H1 (cell line): ENCODE measurements at regions of chr5 and their contacts with region 1.

Region 1: GRCh38 chr5:53035868-53036381 is 46.8 kb downstream of the ITGA2 start:
- DNase-seq: no peak
- H3K4me3 ChIP-seq: no peak overlapping the region
- H3K27ac ChIP-seq: no peak overlapping the region
- H3K4me1 ChIP-seq: no peaks in the 10 kb centered on the region
- H3K27me3 ChIP-seq: no peaks in the 10 kb centered on the region
- CTCF ChIP-seq: peak in 2 of 3 experiments; percentile 35 to 57; a peak in 2 of 4 replicates
- EP300 ChIP-seq: no peak
- POLR2A ChIP-seq: no peak
- RAD21 ChIP-seq: peak; percentile 18 to 32; a peak in 3 of 4 replicates

Region 2: GRCh38 chr5:52915176-52915875 is 120.6 kb before region 1 on chr5:
- CTCF ChIA-PET with region 1: no interaction called
- POLR2A ChIA-PET with region 1: no interaction called
- DNase-seq: peak; percentile 27 to 59
- H3K4me3 ChIP-seq: peak overlapping the region; percentile 13 to 59 (median 32); a peak in 7 of 8 replicates
- H3K27ac ChIP-seq: no peak overlapping the region
- H3K4me1 ChIP-seq: no peaks in the 10 kb centered on the region
- H3K27me3 ChIP-seq: no peaks in the 10 kb centered on the region
- CTCF ChIP-seq: peak; percentile 13 to 76 (median 54)
- EP300 ChIP-seq: no peak
- POLR2A ChIP-seq: no peak
- RAD21 ChIP-seq: peak; percentile 62 to 63

Region 3: GRCh38 chr5:52989781-52990527 is 46.0 kb before region 1 on chr5:
- CTCF ChIA-PET with region 1: interaction called, 11 read pairs
- POLR2A ChIA-PET with region 1: no interaction called
- DNase-seq: peak in 1 of 2 experiments; percentile 57
- H3K4me3 ChIP-seq: peak overlapping the region; percentile 77 to 92 (median 88)
- H3K27ac ChIP-seq: no peak overlapping the region
- H3K4me1 ChIP-seq: no peaks in the 10 kb centered on the region; a peak in 1 of 7 replicates
- H3K27me3 ChIP-seq: peaks cover 0 to 13% (median 10%) of the 10 kb centered on the region in 4 experiments; a peak in 4 of 7 replicates
- CTCF ChIP-seq: peak; percentile 45 to 52 (median 45)
- EP300 ChIP-seq: no peak
- POLR2A ChIP-seq: no peak
- RAD21 ChIP-seq: peak; percentile 62 to 72

Region 4: GRCh38 chr5:53008751-53009150 is 27.2 kb before region 1 on chr5:
- CTCF ChIA-PET with region 1: interaction called, 17 read pairs
- POLR2A ChIA-PET with region 1: no interaction called
- DNase-seq: no peak
- H3K4me3 ChIP-seq: no peak overlapping the region
- H3K27ac ChIP-seq: no peak overlapping the region
- H3K4me1 ChIP-seq: no peaks in the 10 kb centered on the region
- H3K27me3 ChIP-seq: no peaks in the 10 kb centered on the region
- CTCF ChIP-seq: no peak
- EP300 ChIP-seq: no peak
- POLR2A ChIP-seq: no peak
- RAD21 ChIP-seq: no peak

Region 5: DNA sequence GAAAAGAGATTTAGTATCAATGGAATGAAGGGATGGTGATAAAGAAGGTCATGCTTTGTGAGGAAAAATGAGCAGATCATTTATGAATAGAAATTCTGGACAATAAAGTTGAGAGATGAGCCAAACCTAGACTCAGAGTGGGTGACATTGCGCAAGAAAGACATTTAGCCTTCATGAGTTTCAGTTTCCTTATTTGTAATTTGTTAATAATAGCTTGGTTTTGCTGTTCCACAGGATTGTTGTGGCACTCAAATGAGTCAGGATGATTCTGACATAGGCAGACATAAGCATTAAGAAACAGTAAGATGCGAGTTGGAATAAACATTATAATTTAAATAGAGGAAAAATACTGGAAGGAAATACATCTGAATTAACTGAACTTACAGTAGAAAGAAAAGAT is 12.0 kb before region 1 on chr5:
- CTCF ChIA-PET with region 1: interaction called, 24 read pairs
- POLR2A ChIA-PET with region 1: no interaction called
- DNase-seq: no peak
- H3K4me3 ChIP-seq: no peak overlapping the region
- H3K27ac ChIP-seq: no peak overlapping the region
- H3K4me1 ChIP-seq: no peaks in the 10 kb centered on the region
- H3K27me3 ChIP-seq: no peaks in the 10 kb centered on the region
- CTCF ChIP-seq: no peak
- EP300 ChIP-seq: no peak
- POLR2A ChIP-seq: no peak
- RAD21 ChIP-seq: no peak

Region 6: GRCh38 chr5:53052499-53052898 is 16.6 kb after region 1 on chr5:
- CTCF ChIA-PET with region 1: interaction called, 32 read pairs
- POLR2A ChIA-PET with region 1: no interaction called
- DNase-seq: no peak
- H3K4me3 ChIP-seq: no peak overlapping the region
- H3K27ac ChIP-seq: no peak overlapping the region
- H3K4me1 ChIP-seq: peaks cover 0 to 2% (median 0%) of the 10 kb centered on the region in 4 experiments; a peak in 1 of 7 replicates
- H3K27me3 ChIP-seq: no peaks in the 10 kb centered on the region
- CTCF ChIP-seq: no peak
- EP300 ChIP-seq: no peak
- POLR2A ChIP-seq: no peak
- RAD21 ChIP-seq: no peak

Region 7: DNA sequence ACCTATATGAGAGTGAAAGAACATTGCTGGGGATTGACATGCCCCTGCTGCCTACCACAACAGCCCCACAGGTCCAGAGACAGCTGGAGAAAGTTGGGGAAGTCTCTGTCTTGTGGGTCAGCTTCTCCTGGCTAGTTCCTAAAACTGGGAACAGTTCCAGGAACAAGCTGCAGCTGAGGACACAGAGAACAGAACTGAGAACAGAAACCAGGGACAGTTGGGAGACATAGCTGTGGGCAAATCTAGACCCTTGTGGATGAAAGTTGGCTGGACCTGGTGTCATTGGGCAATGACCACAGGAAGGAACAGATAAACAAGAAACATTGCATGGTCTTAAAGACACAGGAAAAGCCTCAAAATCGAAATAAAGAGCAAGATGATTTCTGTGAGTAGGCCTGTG is 131.9 kb after region 1 on chr5:
- CTCF ChIA-PET with region 1: no interaction called
- POLR2A ChIA-PET with region 1: no interaction called
- DNase-seq: no peak
- H3K4me3 ChIP-seq: no peak overlapping the region
- H3K27ac ChIP-seq: no peak overlapping the region
- H3K4me1 ChIP-seq: no peaks in the 10 kb centered on the region
- H3K27me3 ChIP-seq: no peaks in the 10 kb centered on the region
- CTCF ChIP-seq: no peak
- EP300 ChIP-seq: no peak
- POLR2A ChIP-seq: no peak
- RAD21 ChIP-seq: no peak